Prostate gland (tissue), 2 donors: ENCODE measurements at regions of chr9 and their contacts with region 1.

Region 1: GRCh38 chr9:125143375-125144090 is at the start of gene SCAI:
- DNase-seq: peak; percentile 99
- H3K4me3 ChIP-seq: peak within 1 kb of the TSS; percentile 81 to 96
- H3K27ac ChIP-seq: peak within 1 kb of the TSS; percentile 71 to 79
- H3K4me1 ChIP-seq: peaks cover 4% of the 10 kb centered on the region
- H3K27me3 ChIP-seq: no peaks in the 10 kb centered on the region
- CTCF ChIP-seq: peak; percentile 98 to 100 (median 100)
- POLR2A ChIP-seq: peak; percentile 71
- total RNA-seq, gene SCAI: 3.4 to 8.6 TPM

Region 2: GRCh38 chr9:124771021-124771866 is 372.3 kb before region 1 on chr9 and contains the start of gene NR6A1:
- intact Hi-C with region 1: loop called (anchors 10 kb)
- DNase-seq: peak; percentile 97
- H3K4me3 ChIP-seq: peak within 1 kb of the TSS; percentile 88 to 93
- H3K27ac ChIP-seq: peak within 1 kb of the TSS; percentile 60 to 74
- H3K4me1 ChIP-seq: no peaks in the 10 kb centered on the region
- H3K27me3 ChIP-seq: peaks cover 2% of the 10 kb centered on the region
- CTCF ChIP-seq: peak in 3 of 4 experiments; percentile 34 to 54 (median 46)
- POLR2A ChIP-seq: peak; percentile 93
- total RNA-seq, gene NR6A1: 1.3 to 53.7 TPM

Region 3: DNA sequence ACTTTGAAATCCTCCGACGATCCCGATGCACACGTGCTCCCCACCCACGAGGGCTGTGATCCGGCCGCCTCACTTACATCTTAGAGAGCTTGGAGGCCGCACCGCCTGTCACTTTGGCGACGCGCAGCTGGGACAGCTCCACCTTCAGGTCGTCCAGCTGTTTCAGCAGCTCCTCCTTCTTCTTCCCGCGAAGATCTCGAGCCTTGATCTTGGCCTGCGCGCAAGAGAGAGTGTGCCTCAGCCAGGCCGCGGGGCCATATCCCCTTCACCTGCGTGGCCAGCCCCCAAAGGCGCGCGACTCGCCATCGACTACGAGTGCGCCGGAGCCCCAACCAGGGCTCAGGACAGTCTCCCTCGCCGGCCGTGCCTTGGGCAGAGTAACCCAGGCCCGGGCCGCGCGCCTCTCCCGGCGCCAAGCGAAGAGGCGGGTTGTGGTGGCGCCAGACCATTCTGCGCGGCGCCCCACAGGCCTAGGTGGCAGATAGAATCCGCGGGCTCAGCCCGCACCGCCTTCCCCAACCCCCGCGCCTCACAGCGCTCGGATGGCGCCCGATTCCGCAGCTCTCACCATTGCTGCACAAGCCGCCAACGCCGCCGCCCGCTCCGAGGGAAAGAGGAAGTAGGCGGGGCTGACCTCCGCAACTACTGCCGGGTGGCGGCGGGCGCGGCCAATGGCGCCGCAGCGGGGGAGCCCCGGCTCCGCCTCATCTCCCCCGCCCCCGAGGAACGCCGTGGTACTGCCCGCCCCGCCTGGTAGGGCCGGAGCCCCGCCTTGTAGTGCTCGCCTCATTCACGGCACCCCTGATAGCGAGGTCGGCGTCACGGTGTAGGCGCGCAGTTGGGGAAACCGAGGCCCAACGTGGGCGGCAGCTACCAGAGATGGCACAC is 281.9 kb before region 1 on chr9 and contains the starts of genes ARPC5L and RPL35:
- intact Hi-C with region 1: loop called (anchors 5 kb)
- DNase-seq: peak; percentile 94
- H3K4me3 ChIP-seq: peak within 1 kb of the TSS; percentile 71 to 81
- H3K27ac ChIP-seq: peak within 1 kb of the TSS; percentile 67 to 84
- H3K4me1 ChIP-seq: peaks cover 9% of the 10 kb centered on the region
- H3K27me3 ChIP-seq: no peaks in the 10 kb centered on the region
- CTCF ChIP-seq: peak in 3 of 4 experiments; percentile 23 to 45 (median 35)
- POLR2A ChIP-seq: peak; percentile 85
- total RNA-seq, gene ARPC5L: 27.8 to 41.1 TPM
- total RNA-seq, gene RPL35: 1,539 to 2,854 TPM

Region 4: DNA sequence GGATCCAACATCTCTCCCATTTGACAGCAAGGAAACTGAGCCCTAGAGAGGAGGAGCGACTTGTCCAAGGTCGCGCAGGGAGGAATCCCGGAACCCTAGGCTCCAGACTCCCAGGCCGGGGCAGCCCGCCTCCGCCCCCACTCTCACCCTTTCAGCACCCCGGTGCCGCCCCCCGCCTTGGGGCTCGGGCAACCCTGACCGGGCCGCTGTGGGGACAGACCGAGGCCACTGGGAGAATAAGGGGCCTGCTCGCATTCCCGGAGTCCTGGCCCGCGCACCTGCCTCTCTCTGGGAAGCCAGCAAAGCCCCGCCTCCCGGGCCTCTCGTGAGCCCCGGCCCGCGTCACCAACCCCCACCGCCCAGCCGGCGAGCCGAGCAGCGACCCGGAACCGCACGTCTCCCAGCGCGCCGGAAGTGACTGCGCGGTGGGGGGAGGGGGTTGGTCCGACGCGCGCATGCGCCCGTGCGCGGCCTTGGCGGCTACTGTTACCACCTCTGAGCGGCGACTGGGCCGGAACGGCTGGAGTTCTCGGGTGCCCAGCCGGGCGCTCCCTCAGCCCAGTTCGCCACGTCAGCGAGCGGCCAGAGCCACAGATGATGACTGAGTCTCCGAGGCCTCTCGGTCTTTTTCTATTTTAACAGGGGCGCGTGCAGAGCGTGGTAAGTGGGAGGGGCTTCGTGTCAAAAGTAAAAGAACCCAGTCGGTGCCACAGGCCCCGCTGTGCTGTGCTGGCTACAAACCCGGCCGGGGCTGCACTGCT is 202.7 kb before region 1 on chr9 and contains the start of gene GOLGA1:
- intact Hi-C with region 1: loop called (anchors 1 kb)
- DNase-seq: peak; percentile 91
- H3K4me3 ChIP-seq: peak within 1 kb of the TSS; percentile 79 to 81
- H3K27ac ChIP-seq: peak within 1 kb of the TSS; percentile 96
- H3K4me1 ChIP-seq: no peaks in the 10 kb centered on the region
- H3K27me3 ChIP-seq: no peaks in the 10 kb centered on the region
- CTCF ChIP-seq: peak in 1 of 4 experiments; percentile 21
- POLR2A ChIP-seq: peak; percentile 80
- total RNA-seq, gene GOLGA1: 12.5 to 28.3 TPM

Region 5: GRCh38 chr9:125200210-125201047 is 56.9 kb after region 1 on chr9 and contains the start of gene RABEPK:
- intact Hi-C with region 1: loop called (anchors 5 kb)
- DNase-seq: peak; percentile 89
- H3K4me3 ChIP-seq: peak within 1 kb of the TSS; percentile 65 to 67
- H3K27ac ChIP-seq: peak within 1 kb of the TSS; percentile 81 to 91
- H3K4me1 ChIP-seq: no peaks in the 10 kb centered on the region
- H3K27me3 ChIP-seq: no peaks in the 10 kb centered on the region
- CTCF ChIP-seq: no peak
- POLR2A ChIP-seq: peak; percentile 75
- total RNA-seq, gene RABEPK: 13.3 to 14.2 TPM